ENCODE measurements at regions of chr13 and their contacts with region 1.

Region 1: DNA sequence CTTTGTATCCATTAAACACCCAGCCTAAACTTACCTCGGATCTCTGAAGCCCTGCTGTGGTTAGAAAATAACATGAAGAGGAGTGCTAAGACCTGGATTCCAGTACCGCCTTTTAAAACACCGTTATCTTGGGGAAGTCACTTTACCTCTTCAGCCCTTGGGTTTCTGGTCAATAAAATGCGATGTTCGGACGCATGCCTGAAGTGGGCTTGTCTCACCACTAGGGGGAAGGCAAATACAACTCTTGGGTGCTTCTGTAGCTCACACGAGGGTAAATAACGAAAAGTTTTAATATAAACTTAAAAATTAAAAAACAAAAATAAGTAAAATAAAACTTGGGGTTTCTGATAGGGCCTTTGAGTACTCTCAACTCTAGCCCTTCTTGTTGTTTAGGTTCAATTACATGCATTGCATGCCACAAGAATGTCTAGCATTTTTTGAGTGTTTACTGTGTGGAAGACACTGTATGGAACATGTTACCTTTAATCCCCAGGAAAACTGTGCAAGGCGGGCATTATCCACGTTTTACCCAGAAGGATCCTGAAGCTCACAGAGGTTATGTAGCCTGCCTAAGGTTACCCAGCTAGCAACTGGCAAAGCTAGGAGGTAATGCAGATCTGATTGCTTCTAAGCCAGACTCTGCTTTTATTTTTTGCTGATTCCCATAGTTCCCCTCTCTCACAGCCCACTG is 240.4 kb downstream of the LMO7 start:
- DNase-seq: peak; percentile 47 to 48
- H3K4me3 ChIP-seq: no peak overlapping the region
- H3K27ac ChIP-seq: no peak overlapping the region
- H3K4me1 ChIP-seq: no peaks in the 10 kb centered on the region
- H3K27me3 ChIP-seq: no peaks in the 10 kb centered on the region
- CTCF ChIP-seq: peak; percentile 95

Region 2: DNA sequence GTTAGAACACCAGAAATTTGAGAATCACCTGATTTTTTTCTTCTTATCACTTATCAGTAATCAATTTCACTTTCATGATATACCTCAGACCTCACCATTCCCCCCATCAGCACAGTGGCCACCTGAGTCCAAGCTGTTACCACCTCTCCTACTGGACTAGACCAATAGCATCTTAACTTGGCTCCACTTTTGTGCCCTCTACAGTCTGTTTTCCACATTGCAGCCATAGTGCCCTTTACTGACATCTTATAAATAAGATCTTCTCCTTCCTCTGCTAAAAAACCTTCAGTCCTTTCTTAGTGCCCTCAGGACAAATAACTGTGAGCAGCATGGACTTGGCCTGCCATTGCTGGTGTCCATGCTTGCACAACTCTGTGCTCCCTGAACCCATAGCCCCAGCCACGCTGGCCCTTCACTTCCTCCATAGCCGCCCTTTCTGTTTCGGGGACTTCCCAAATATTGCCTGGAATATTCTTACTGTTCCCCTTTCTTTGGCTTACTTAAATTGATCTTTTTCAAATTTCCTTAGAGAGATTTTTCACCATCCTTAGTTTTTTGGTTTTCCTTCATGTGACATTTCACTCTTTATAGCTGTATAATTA is 140.4 kb after region 1 on chr13:
- CTCF ChIA-PET with region 1: no interaction called
- POLR2A ChIA-PET with region 1: no interaction called
- intact Hi-C with region 1: loop called (anchors 2 kb)
- DNase-seq: peak in 1 of 2 experiments; percentile 8
- H3K4me3 ChIP-seq: no peak overlapping the region
- H3K27ac ChIP-seq: no peak overlapping the region
- H3K4me1 ChIP-seq: no peaks in the 10 kb centered on the region; the same call in none of the 2 replicates
- H3K27me3 ChIP-seq: no peaks in the 10 kb centered on the region
- CTCF ChIP-seq: peak; percentile 59

Region 3: GRCh38 chr13:76473552-76474134 is 597.1 kb after region 1 on chr13:
- CTCF ChIA-PET with region 1: no interaction called
- POLR2A ChIA-PET with region 1: no interaction called
- intact Hi-C with region 1: loop called (anchors 1 kb)
- DNase-seq: peak; percentile 48 to 68
- H3K4me3 ChIP-seq: no peak overlapping the region
- H3K27ac ChIP-seq: no peak overlapping the region
- H3K4me1 ChIP-seq: no peaks in the 10 kb centered on the region
- H3K27me3 ChIP-seq: no peaks in the 10 kb centered on the region
- CTCF ChIP-seq: peak; percentile 94

Region 4: GRCh38 chr13:76903544-76904162 is 1027.1 kb after region 1 on chr13:
- CTCF ChIA-PET with region 1: interaction called, 7 read pairs
- POLR2A ChIA-PET with region 1: no interaction called
- intact Hi-C with region 1: loop called (anchors 2 kb)
- DNase-seq: peak; percentile 42 to 49
- H3K4me3 ChIP-seq: no peak overlapping the region
- H3K27ac ChIP-seq: no peak overlapping the region
- H3K4me1 ChIP-seq: no peaks in the 10 kb centered on the region
- H3K27me3 ChIP-seq: no peaks in the 10 kb centered on the region
- CTCF ChIP-seq: peak; percentile 96

Region 5: DNA sequence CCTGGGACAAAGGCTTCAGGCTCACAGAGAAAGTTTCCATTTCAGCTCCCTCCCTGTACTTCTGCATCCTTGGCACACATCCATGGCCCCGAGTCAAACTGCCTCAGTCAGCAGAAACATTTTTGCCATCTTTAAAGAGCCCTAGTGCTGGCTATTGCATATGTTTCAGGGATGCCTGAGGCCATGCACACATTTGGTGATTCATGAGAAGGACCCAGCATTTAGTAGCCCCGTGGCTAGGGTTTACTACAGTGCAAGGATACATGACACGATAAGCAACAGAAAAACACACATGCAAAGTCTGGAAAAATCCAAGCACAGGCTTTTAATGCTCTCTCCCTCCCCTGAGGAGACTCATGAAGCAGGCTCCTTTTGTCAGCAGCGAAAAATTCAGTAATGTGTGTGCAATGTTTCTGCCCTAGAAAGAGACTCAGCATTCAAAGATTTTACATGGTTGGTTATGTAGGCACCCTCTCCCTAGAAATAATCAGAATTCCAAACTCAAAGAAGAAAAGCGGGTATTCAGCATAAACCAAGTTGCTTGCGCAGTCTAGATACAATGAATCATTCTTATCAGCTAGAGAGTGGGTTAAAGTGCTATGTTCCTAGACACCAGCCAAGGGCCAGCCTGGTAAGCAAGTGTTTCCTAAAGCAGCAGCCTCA is 1089.4 kb after region 1 on chr13:
- CTCF ChIA-PET with region 1: no interaction called
- POLR2A ChIA-PET with region 1: no interaction called
- intact Hi-C with region 1: no loop called
- DNase-seq: peak in 1 of 2 experiments; percentile 67
- H3K4me3 ChIP-seq: peak overlapping the region; percentile 2; the same call in 1 of the 2 replicates
- H3K27ac ChIP-seq: peak overlapping the region; percentile 17
- H3K4me1 ChIP-seq: peaks cover 26% of the 10 kb centered on the region
- H3K27me3 ChIP-seq: no peaks in the 10 kb centered on the region
- CTCF ChIP-seq: no peak

Region 6: DNA sequence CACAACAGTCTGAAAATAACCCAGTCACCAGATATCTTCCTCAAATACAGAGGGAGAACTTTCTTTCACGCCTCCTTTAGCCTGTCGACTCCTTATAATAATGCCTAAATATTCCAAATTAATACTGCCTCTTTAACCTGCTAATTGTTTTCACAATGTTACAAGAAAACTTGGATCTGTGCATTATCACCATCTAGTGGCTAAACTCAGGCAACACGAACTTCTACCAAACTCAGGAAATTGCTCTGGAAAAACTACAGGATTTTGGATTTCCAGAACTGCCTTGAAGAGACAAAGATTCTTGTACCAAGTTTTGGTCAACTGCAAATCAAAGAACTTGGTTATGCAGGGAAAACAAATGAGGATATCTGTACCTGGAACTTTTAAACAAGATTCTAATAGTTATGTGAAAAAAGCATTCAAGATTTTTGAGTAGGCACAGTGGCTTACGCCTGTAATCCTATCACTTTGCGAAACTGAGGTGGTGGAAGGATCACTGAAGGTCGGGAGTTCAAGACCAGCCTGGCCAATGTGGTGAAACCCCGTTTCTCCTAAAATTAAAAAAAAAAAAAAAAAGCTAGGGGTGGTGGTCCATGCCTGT is 1126.2 kb after region 1 on chr13:
- CTCF ChIA-PET with region 1: no interaction called
- POLR2A ChIA-PET with region 1: no interaction called
- intact Hi-C with region 1: loop called (anchors 1 kb)
- DNase-seq: peak in 1 of 2 experiments; percentile 9
- H3K4me3 ChIP-seq: no peak overlapping the region
- H3K27ac ChIP-seq: no peak overlapping the region
- H3K4me1 ChIP-seq: no peaks in the 10 kb centered on the region
- H3K27me3 ChIP-seq: no peaks in the 10 kb centered on the region
- CTCF ChIP-seq: peak; percentile 77